Panc1 (cell line): ENCODE measurements at regions of chr5 and their contacts with region 1.

Region 1: DNA sequence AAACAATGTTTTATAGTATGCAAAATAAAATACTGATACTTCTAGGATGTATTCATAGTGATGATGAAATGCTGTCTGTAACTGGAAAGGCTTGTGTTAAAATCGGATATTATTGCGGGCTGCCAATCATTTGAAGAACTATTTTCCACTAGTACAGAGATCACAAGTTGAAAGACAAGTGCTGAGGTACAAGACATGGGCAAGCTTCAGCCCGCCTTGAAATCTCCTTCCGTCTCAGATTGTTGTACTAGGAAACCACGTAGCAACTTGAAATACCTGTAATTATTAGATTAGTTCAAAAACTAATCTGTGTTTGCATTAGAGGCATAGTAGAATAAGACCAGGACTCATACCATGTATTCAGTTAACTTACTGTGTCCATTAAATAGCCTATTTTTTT is 218.2 kb downstream of the ARHGEF28 start:
- DNase-seq: no peak
- ATAC-seq: no peak
- H3K4me3 ChIP-seq: no peak overlapping the region
- H3K27ac ChIP-seq: no peak overlapping the region
- H3K4me1 ChIP-seq: no peaks in the 10 kb centered on the region
- H3K27me3 ChIP-seq: no peaks in the 10 kb centered on the region
- CTCF ChIP-seq: no peak

Region 2: DNA sequence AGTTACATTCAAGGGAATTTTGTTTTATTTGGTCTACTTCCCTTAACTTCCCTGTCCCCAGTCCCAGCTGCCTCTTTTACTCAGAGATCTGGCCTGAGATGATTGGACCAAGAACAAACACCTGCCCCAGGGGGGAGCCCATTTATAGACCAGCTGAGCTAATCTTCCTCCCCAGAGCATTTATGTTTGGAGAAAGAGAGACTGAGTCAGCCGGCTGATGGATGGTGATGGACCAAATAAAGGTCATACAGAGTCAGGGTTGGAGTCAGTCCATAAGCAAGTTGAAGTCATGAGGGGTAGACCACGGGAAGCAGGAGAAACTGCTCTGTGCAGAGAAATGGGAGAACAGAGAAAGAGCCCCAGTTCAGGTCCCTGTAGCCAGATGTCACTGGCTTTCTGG is 593.5 kb before region 1 on chr5:
- CTCF ChIA-PET with region 1: no interaction called
- POLR2A ChIA-PET with region 1: interaction called, 13 read pairs
- in situ Hi-C with region 1: no loop called
- intact Hi-C with region 1: no loop called
- DNase-seq: no peak
- ATAC-seq: no peak
- H3K4me3 ChIP-seq: no peak overlapping the region
- H3K27ac ChIP-seq: no peak overlapping the region
- H3K4me1 ChIP-seq: no peaks in the 10 kb centered on the region
- H3K27me3 ChIP-seq: no peaks in the 10 kb centered on the region; the same call in 1 of the 2 replicates
- CTCF ChIP-seq: no peak

Region 3: GRCh38 chr5:73654171-73654811 is 189.9 kb before region 1 on chr5:
- CTCF ChIA-PET with region 1: no interaction called
- POLR2A ChIA-PET with region 1: no interaction called
- in situ Hi-C with region 1: no loop called
- intact Hi-C with region 1: no loop called
- DNase-seq: no peak
- ATAC-seq: peak; percentile 43
- H3K4me3 ChIP-seq: no peak overlapping the region
- H3K27ac ChIP-seq: peak overlapping the region; percentile 53; the same call in 1 of the 2 replicates
- H3K4me1 ChIP-seq: peaks cover 13% of the 10 kb centered on the region
- H3K27me3 ChIP-seq: no peaks in the 10 kb centered on the region
- CTCF ChIP-seq: no peak